Right cardiac atrium (tissue), 5 donors: ENCODE measurements at regions of chr9 and their contacts with region 1.

Region 1: DNA sequence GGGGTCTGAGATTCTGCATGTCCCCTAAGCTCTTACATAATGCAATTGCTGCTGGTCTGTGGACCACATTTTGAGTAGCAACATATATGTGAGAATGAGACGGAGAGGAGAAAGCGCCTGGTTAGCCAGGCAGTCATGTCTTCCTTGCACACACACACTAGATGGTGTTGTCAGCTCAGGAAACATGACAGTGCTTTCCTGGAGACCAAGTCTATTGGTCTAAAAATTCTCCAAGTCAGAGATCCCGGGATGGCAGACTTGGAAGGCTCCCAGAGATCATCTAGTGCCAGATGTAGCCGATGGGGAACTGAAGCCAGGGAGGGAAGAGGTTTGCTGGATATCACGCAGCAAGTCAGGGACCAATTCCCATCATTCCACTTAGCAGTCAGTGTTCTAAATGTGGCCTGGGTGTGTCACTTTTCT is 53.4 kb downstream of the GALNT12 start:
- DNase-seq: peak; percentile 81 to 87 (median 84)
- ATAC-seq: peak; percentile 90 to 91
- H3K4me3 ChIP-seq: no peak overlapping the region
- H3K27ac ChIP-seq: peak overlapping the region; percentile 51
- H3K4me1 ChIP-seq: peaks cover 9% of the 10 kb centered on the region
- H3K27me3 ChIP-seq: no peaks in the 10 kb centered on the region

Region 2: DNA sequence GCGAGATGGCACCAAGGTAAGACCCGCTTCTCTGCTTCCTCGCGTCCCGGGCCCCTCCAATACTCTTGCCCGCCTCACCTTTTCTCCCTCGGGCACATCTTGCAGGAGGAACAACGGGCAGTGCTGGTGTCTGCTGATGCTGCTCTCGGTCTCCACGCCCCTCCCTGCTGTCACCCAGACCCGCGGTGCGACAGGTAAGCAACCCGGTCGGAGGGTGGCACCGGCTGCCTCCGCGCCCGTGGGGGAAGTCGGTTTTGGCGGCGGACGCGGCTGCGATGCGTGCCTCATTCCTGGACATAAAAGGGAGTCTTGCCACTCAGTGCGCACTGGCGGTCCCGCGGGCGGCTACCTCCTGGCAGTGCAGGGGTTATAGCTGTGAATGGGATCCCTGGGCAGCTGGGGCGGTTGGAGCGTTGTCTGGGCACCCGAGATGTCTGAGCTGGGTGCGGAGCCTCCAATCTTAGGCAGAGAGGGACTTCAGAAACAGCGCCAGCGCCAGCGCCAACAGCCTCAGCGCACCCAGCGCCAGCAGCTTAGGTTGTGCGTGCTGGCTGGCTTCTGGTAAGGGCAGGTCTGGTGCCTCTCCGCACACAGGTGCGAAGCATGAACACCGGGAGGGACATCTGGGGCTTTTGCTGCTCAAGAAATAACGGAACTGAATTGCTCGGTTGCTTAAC is 83.3 kb after region 1 on chr9:
- intact Hi-C with region 1: loop called in 1 of 4 experiments (anchors 10 kb)
- DNase-seq: peak; percentile 32 to 74 (median 73)
- ATAC-seq: peak; percentile 51 to 55
- H3K4me3 ChIP-seq: peak overlapping the region; percentile 68
- H3K27ac ChIP-seq: peak overlapping the region; percentile 19
- H3K4me1 ChIP-seq: peaks cover 9% of the 10 kb centered on the region
- H3K27me3 ChIP-seq: no peaks in the 10 kb centered on the region

Region 3: GRCh38 chr9:98993570-98993945 is 132.7 kb after region 1 on chr9:
- intact Hi-C with region 1: loop called (anchors 2 to 5 kb)
- DNase-seq: peak; percentile 66 to 82 (median 78)
- ATAC-seq: peak; percentile 6 to 14
- H3K4me3 ChIP-seq: no peak overlapping the region
- H3K27ac ChIP-seq: peak overlapping the region; percentile 3
- H3K4me1 ChIP-seq: peaks cover 20% of the 10 kb centered on the region
- H3K27me3 ChIP-seq: no peaks in the 10 kb centered on the region

Region 4: GRCh38 chr9:98998441-98999151 is 137.7 kb after region 1 on chr9:
- intact Hi-C with region 1: loop called (anchors 2 to 5 kb)
- DNase-seq: peak; percentile 91 to 95 (median 95)
- ATAC-seq: peak; percentile 86 to 88
- H3K4me3 ChIP-seq: no peak overlapping the region
- H3K27ac ChIP-seq: peak overlapping the region; percentile 54
- H3K4me1 ChIP-seq: peaks cover 7% of the 10 kb centered on the region
- H3K27me3 ChIP-seq: no peaks in the 10 kb centered on the region

Region 5: GRCh38 chr9:99140685-99141314 is 279.9 kb after region 1 on chr9:
- intact Hi-C with region 1: loop called in 3 of 4 experiments (anchors 5 to 10 kb)
- DNase-seq: peak in 1 of 3 donors; percentile 27
- ATAC-seq: peak; percentile 85 to 86
- H3K4me3 ChIP-seq: no peak overlapping the region
- H3K27ac ChIP-seq: no peak overlapping the region
- H3K4me1 ChIP-seq: no peaks in the 10 kb centered on the region
- H3K27me3 ChIP-seq: no peaks in the 10 kb centered on the region